H1 (cell line): ENCODE measurements at regions of chr1 and their contacts with region 1.

Region 1: GRCh38 chr1:175742790-175743459 is 470 bp downstream of the TNR start:
- DNase-seq: peak in 1 of 2 experiments; percentile 59
- H3K4me3 ChIP-seq: peak overlapping the region; percentile 12 to 31 (median 18); a peak in 6 of 8 replicates
- H3K27ac ChIP-seq: no peak overlapping the region
- H3K4me1 ChIP-seq: peaks cover 0 to 7% (median 3%) of the 10 kb centered on the region in 4 experiments; a peak in 3 of 7 replicates
- H3K27me3 ChIP-seq: peaks cover 0 to 6% (median 0%) of the 10 kb centered on the region in 4 experiments; a peak in 2 of 7 replicates
- CTCF ChIP-seq: no peak
- EP300 ChIP-seq: no peak
- POLR2A ChIP-seq: no peak
- RAD21 ChIP-seq: peak in 1 of 2 experiments; percentile 31; a peak in 1 of 4 replicates

Region 2: GRCh38 chr1:175373786-175374623 is 368.9 kb before region 1 on chr1:
- CTCF ChIA-PET with region 1: interaction called, 12 read pairs
- POLR2A ChIA-PET with region 1: no interaction called
- DNase-seq: peak; percentile 21 to 85
- H3K4me3 ChIP-seq: no peak overlapping the region
- H3K27ac ChIP-seq: no peak overlapping the region
- H3K4me1 ChIP-seq: peaks cover 0 to 4% (median 0%) of the 10 kb centered on the region in 4 experiments; a peak in 3 of 7 replicates
- H3K27me3 ChIP-seq: no peaks in the 10 kb centered on the region; a peak in 1 of 7 replicates
- CTCF ChIP-seq: peak; percentile 86 to 91 (median 90)
- EP300 ChIP-seq: no peak
- POLR2A ChIP-seq: no peak
- RAD21 ChIP-seq: peak; percentile 97 to 99

Region 3: DNA sequence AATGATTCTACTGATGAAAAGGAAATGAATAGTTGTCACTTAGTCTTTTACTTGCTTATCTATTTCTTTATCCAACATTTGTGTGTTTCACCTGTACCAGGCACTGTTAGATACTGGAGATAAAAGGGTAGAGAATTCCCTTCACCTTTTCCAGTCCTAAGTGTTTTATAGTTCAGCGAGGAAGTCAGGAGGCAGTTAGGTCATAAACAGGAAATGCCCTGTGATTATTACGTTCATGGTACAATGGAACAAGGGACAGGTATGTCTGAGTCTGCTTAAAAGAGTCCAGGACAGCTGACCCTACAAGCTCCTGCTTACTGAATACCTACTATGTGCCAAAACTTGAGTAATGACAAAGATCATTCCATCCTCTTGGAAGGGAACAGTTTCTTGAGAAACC is 77.3 kb before region 1 on chr1:
- CTCF ChIA-PET with region 1: interaction called, 14 read pairs
- POLR2A ChIA-PET with region 1: no interaction called
- DNase-seq: no peak
- H3K4me3 ChIP-seq: no peak overlapping the region
- H3K27ac ChIP-seq: no peak overlapping the region
- H3K4me1 ChIP-seq: no peaks in the 10 kb centered on the region
- H3K27me3 ChIP-seq: no peaks in the 10 kb centered on the region; a peak in 1 of 7 replicates
- CTCF ChIP-seq: no peak
- EP300 ChIP-seq: no peak
- POLR2A ChIP-seq: no peak
- RAD21 ChIP-seq: no peak

Region 4: GRCh38 chr1:175702079-175702795 is 40.7 kb before region 1 on chr1:
- CTCF ChIA-PET with region 1: interaction called, 15 read pairs
- POLR2A ChIA-PET with region 1: no interaction called
- DNase-seq: no peak
- H3K4me3 ChIP-seq: 0 out of 8 replicates have a peak overlapping the region, but pooled peaks of 1 of the 4 experiments have one; percentile 12
- H3K27ac ChIP-seq: no peak overlapping the region
- H3K4me1 ChIP-seq: peaks cover 2 to 14% (median 5%) of the 10 kb centered on the region in 4 experiments; a peak in 6 of 7 replicates
- H3K27me3 ChIP-seq: no peaks in the 10 kb centered on the region
- CTCF ChIP-seq: no peak
- EP300 ChIP-seq: no peak
- POLR2A ChIP-seq: no peak
- RAD21 ChIP-seq: no peak

Region 5: GRCh38 chr1:175725684-175726083 is 17.2 kb before region 1 on chr1:
- CTCF ChIA-PET with region 1: interaction called, 67 read pairs
- POLR2A ChIA-PET with region 1: no interaction called
- DNase-seq: no peak
- H3K4me3 ChIP-seq: no peak overlapping the region
- H3K27ac ChIP-seq: no peak overlapping the region
- H3K4me1 ChIP-seq: no peaks in the 10 kb centered on the region
- H3K27me3 ChIP-seq: no peaks in the 10 kb centered on the region; a peak in 1 of 7 replicates
- CTCF ChIP-seq: no peak
- EP300 ChIP-seq: no peak
- POLR2A ChIP-seq: no peak
- RAD21 ChIP-seq: 0 out of 4 replicates have a peak, but pooled peaks of 1 of the 2 experiments have one; percentile 10

Region 6: GRCh38 chr1:175818929-175819328 is 76.0 kb after region 1 on chr1:
- CTCF ChIA-PET with region 1: interaction called, 32 read pairs
- POLR2A ChIA-PET with region 1: no interaction called
- DNase-seq: no peak
- H3K4me3 ChIP-seq: no peak overlapping the region
- H3K27ac ChIP-seq: no peak overlapping the region
- H3K4me1 ChIP-seq: peaks cover 0 to 3% (median 0%) of the 10 kb centered on the region in 4 experiments; a peak in 1 of 7 replicates
- H3K27me3 ChIP-seq: no peaks in the 10 kb centered on the region
- CTCF ChIP-seq: no peak
- EP300 ChIP-seq: no peak
- POLR2A ChIP-seq: no peak
- RAD21 ChIP-seq: no peak

Region 7: DNA sequence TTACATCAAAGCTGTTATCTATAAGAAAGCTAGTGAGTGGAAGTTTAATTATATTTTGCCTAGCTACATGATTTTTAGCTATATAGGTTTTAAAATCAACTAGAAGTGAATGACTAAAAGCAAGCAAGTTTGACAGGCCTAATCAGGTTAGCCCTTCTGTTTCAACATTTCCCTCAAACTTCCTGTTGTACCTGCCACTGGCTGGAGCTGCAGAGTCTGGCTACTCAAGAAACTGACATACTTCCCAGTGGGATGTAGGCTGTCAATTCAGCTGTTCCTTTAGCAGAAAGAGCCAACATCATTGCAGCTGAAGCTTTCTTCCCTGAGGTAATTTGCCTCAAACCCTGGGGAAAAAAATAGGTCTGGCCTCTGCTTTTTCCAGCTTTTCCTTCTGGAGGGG is 87.6 kb after region 1 on chr1:
- CTCF ChIA-PET with region 1: interaction called, 32 read pairs
- POLR2A ChIA-PET with region 1: no interaction called
- DNase-seq: no peak
- H3K4me3 ChIP-seq: no peak overlapping the region
- H3K27ac ChIP-seq: no peak overlapping the region
- H3K4me1 ChIP-seq: peaks cover 0 to 16% (median under 1%) of the 10 kb centered on the region in 4 experiments; a peak in 5 of 7 replicates
- H3K27me3 ChIP-seq: no peaks in the 10 kb centered on the region
- CTCF ChIP-seq: no peak
- EP300 ChIP-seq: no peak
- POLR2A ChIP-seq: no peak
- RAD21 ChIP-seq: no peak